Left cardiac atrium (tissue), 4 donors: ENCODE measurements at regions of chr7 and their contacts with region 1.

Region 1: GRCh38 chr7:4973728-4974198 is 14.8 kb upstream of the MMD2 start:
- DNase-seq: peak; percentile 93
- ATAC-seq: peak; percentile 98

Region 2: GRCh38 chr7:5088906-5089305 is 115.1 kb after region 1 on chr7:
- intact Hi-C with region 1: loop called (anchors 5 kb)
- DNase-seq: no peak
- ATAC-seq: no peak

Region 3: GRCh38 chr7:5591278-5591874 is 617.6 kb after region 1 on chr7:
- intact Hi-C with region 1: no loop called
- DNase-seq: no peak
- ATAC-seq: peak; percentile 3 to 10